WTC11 (cell line): ENCODE measurements at regions of chr17 and their contacts with region 1.

Region 1: DNA sequence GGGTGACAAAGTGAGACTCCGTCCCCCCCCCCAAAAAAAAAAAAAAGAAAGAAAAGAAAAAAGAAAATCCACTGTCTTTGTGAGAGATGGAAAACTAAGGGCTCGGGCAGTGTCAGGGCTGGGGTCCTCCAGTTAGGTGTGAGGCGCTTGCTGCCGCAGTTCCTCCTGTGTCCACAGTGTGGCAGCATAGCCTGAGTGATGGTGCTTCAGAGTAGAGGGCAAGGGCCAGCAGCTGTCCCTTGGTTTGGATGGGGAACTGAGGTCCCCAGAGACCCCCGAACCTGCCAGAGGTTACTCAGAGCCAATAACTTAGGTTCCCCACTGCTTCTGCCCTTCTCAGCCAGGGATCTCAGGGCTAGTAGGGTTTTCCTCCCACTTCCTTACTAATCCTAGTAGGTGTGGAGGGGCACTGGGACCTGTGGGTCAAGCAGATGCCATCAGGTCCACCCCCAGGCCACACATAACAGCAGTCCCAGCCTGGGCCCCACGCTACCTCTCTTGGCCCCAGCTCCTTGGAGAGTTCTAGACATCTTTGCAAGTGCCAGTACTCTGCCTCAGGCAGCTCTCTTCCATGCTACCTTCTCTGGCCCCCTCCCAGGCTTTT is 7.9 kb upstream of the LLGL1 start:
- DNase-seq: peak; percentile 91
- ATAC-seq: peak; percentile 95
- H3K4me3 Mint-ChIP-seq: no peak overlapping the region
- H3K27ac Mint-ChIP-seq: no peak overlapping the region
- H3K4me1 Mint-ChIP-seq: peaks cover 7% of the 10 kb centered on the region
- H3K27me3 Mint-ChIP-seq: no peaks in the 10 kb centered on the region
- CTCF ChIP-seq: peak; percentile 79

Region 2: DNA sequence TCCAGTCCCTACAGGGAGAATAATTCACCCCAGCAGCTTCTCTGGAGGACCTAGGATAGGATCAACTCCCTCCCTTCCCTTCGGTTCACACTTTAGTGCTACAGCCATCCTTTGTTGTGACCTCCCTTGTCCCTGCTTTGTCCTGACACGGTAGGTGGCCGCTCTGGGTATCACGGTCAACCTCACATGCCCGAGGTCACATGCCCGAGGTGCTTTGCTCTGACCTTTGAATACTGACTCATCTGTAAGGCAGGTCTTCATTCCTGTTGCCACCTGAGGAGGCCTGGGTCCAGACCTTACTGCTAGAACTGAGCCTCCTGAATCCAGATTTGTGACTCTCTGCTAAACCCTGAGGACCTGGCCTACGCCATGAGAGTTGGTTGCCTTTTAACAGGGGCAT is 14.2 kb before region 1 on chr17:
- CTCF ChIA-PET with region 1: interaction called, 16 read pairs
- POLR2A ChIA-PET with region 1: no interaction called
- DNase-seq: no peak
- ATAC-seq: peak; percentile 24; the same call in 1 of the 2 replicates
- H3K4me3 Mint-ChIP-seq: no peak overlapping the region
- H3K27ac Mint-ChIP-seq: peak overlapping the region; percentile 80; the same call in 1 of the 2 replicates
- H3K4me1 Mint-ChIP-seq: peaks cover 7% of the 10 kb centered on the region; the same call in 1 of the 2 replicates
- H3K27me3 Mint-ChIP-seq: no peaks in the 10 kb centered on the region
- CTCF ChIP-seq: no peak

Region 3: DNA sequence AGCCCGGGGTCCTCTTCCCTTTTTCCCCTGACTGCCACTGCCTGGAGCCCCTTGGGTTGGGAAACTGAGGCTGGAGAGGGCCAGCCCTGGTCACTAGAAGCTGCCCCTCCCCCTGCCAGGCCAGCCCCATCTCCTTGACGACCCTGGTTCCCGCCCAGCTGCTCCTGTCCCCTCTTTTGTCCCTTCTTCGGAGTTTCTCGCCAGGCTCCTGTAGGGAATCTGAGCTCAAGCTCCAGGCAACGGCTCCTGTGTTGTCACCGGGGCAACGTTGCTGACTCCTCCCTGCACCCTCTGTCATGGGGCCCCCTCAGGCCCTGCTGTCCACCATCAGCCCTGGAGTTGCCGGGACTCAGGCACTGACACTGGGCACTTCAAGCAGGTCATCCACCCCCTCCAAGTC is 13.7 kb after region 1 on chr17:
- CTCF ChIA-PET with region 1: interaction called, 19 read pairs
- POLR2A ChIA-PET with region 1: no interaction called
- DNase-seq: no peak
- ATAC-seq: no peak
- H3K4me3 Mint-ChIP-seq: no peak overlapping the region
- H3K27ac Mint-ChIP-seq: 0 out of 2 replicates have a peak overlapping the region, but pooled peaks have one; percentile 49
- H3K4me1 Mint-ChIP-seq: peaks cover 18% of the 10 kb centered on the region
- H3K27me3 Mint-ChIP-seq: no peaks in the 10 kb centered on the region
- CTCF ChIP-seq: no peak

Region 4: DNA sequence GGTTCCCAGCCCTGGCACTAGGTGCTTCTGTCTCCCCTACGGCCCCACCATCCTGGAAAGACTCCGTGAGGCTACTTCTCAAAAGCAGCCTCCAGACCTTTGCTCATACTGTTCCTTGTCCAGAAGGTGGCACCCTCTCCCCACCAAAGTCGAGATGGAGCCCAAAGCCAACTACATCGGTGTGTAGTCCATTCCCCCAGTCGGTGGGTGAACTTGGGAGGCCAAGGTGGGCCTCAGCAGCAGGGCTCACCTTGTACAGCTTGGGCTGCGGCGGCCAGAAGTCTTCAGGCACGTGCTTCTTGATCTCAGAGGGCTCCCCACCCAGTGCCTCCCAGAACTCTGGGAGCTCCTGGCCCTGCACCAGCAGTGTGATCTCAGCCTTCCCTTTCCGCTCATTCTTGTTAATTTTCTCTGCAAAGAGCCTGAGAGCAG is 30.8 kb after region 1 on chr17:
- CTCF ChIA-PET with region 1: interaction called, 19 read pairs
- POLR2A ChIA-PET with region 1: no interaction called
- DNase-seq: peak; percentile 76
- ATAC-seq: peak; percentile 43
- H3K4me3 Mint-ChIP-seq: peak overlapping the region; percentile 55
- H3K27ac Mint-ChIP-seq: peak overlapping the region; percentile 99
- H3K4me1 Mint-ChIP-seq: peaks cover 25% of the 10 kb centered on the region
- H3K27me3 Mint-ChIP-seq: no peaks in the 10 kb centered on the region
- CTCF ChIP-seq: peak; percentile 50; the same call in 1 of the 2 replicates

Region 5: GRCh38 chr17:18281788-18282187 is 64.3 kb after region 1 on chr17:
- CTCF ChIA-PET with region 1: interaction called, 3 read pairs
- POLR2A ChIA-PET with region 1: interaction called, 12 read pairs
- DNase-seq: no peak
- ATAC-seq: no peak
- H3K4me3 Mint-ChIP-seq: no peak overlapping the region
- H3K27ac Mint-ChIP-seq: 0 out of 2 replicates have a peak overlapping the region, but pooled peaks have one; percentile 53
- H3K4me1 Mint-ChIP-seq: no peaks in the 10 kb centered on the region
- H3K27me3 Mint-ChIP-seq: no peaks in the 10 kb centered on the region
- CTCF ChIP-seq: no peak